Gastrocnemius medialis (tissue), 4 donors: ENCODE measurements at regions of chr15 and their contacts with region 1.

Region 1: DNA sequence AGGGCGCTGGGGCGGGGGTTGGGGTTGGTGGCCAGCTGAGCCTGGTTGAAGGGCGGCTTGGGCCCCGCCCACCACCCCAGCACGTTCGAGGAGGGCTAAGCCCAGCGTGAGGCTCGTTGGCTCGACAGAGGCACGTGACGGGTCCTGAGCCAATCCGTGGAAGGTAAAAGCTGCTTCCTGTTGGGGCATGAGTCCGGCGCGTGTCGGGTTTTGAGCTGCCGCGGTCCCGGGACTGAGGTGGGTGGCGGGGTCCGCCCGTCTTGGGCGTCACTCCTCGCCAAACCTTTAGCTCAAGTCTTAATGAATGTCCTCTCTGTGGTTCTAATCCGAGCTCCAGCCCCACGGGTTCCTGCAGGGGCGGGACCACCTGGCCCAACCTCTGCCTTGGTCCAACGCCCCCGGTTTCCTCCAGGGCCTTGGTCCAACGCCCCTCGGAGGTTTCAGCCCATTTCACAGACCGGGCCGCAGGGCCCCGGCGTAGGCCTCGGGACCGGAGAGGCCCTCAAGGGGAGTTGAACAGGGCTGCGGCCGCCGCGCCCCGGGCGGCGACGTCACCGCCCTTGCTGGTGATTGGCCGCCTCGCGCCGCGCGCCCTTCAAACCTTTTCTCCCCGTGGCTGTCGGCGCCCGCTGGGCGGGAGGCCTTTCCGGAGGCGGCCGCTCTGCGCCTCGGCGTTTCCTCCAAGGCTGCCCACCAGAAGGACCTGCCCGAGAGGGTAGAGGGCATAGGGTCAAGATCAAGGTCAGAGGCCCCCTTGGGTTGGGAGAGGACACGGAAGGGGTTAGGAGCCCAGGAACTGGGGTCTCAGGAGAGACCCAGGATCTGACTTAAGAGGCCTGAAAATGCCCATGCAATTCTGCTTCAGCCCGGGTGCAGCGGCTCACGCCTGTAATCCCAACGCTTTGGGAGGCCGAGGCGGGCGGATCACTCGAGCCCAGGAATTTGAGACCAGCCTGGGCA is at the start of gene RCCD1:
- DNase-seq: peak; percentile 96 to 97
- ATAC-seq: peak; percentile 93
- H3K4me3 ChIP-seq: peak within 1 kb of the TSS; percentile 72 to 88 (median 83)
- H3K27ac ChIP-seq: peak within 1 kb of the TSS; percentile 94 to 97 (median 94)
- H3K4me1 ChIP-seq: peaks cover 28 to 29% of the 10 kb centered on the region in 2 donors
- H3K27me3 ChIP-seq: no peaks in the 10 kb centered on the region
- CTCF ChIP-seq: peak in 1 of 5 experiments; percentile 5
- POLR2A ChIP-seq: peak; percentile 79 to 83
- total RNA-seq, gene RCCD1: 1.4 to 4.8 (median 4.4) TPM

Region 2: DNA sequence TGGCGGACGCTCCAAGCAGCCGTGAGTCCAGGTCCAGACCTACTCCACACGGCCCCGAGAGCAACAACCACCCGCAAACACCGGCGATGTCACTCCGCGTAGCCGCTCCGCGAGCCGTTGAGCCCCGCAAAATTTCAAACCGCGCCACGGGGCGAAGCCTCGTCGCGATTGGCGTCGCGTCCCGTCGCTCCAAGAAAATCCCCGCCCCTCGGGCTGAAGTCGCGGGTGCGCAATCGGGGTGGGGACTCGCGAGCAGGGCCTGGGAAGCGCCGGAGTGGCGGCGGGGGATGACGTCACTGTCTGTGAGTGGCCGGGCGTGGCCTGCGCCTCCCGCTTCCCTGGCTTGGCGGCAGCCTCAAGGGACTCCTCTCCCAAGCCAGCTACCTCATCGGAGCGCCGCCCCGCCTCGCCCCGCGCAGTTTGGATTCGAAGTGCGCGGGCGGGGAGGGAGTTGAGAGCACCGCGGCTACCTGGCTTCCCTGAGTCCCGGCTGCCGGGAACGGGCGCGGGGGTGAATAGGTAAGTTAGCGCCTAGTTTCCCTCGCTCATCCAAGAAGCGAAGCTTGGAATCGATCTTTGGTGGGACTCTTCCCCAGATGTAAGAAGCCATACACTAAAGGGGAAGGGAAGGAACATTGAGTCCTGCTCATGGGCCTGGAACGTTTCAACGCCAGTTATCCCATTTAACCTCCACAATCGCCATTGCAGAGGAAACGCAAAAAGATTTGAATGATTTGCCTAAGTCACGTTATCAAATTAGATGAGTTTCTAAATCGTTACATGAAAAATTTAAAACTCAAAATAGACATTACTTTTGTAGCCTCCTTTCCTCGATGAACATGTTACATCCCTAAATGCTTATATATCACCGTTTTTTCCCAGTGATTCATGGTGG is 39.7 kb after region 1 on chr15 and contains the start of gene PRC1:
- in situ Hi-C with region 1: no loop called
- intact Hi-C with region 1: loop called (anchors 1 kb)
- DNase-seq: peak; percentile 97 to 98
- ATAC-seq: peak; percentile 98
- H3K4me3 ChIP-seq: peak within 1 kb of the TSS; percentile 77 to 99 (median 87)
- H3K27ac ChIP-seq: peak within 1 kb of the TSS; percentile 75 to 86 (median 82)
- H3K4me1 ChIP-seq: peaks cover 0 to 13% of the 10 kb centered on the region in 2 donors
- H3K27me3 ChIP-seq: no peaks in the 10 kb centered on the region
- CTCF ChIP-seq: no peak
- POLR2A ChIP-seq: peak; percentile 48 to 68
- total RNA-seq, gene PRC1: 1.4 to 9.9 (median 4.9) TPM

Region 3: GRCh38 chr15:91022075-91022835 is 67.3 kb after region 1 on chr15 and contains the start of gene VPS33B:
- in situ Hi-C with region 1: no loop called
- intact Hi-C with region 1: loop called (anchors 2 kb)
- DNase-seq: peak; percentile 70 to 73
- ATAC-seq: peak; percentile 93 to 96
- H3K4me3 ChIP-seq: peak within 1 kb of the TSS; percentile 74 to 98 (median 96)
- H3K27ac ChIP-seq: peak within 1 kb of the TSS; percentile 68 to 83 (median 72)
- H3K4me1 ChIP-seq: peaks cover 18 to 26% of the 10 kb centered on the region in 2 donors
- H3K27me3 ChIP-seq: no peaks in the 10 kb centered on the region
- CTCF ChIP-seq: no peak
- POLR2A ChIP-seq: peak in 1 of 2 donors; percentile 15
- total RNA-seq, gene VPS33B: 3.3 to 7.7 (median 4.3) TPM

Region 4: DNA sequence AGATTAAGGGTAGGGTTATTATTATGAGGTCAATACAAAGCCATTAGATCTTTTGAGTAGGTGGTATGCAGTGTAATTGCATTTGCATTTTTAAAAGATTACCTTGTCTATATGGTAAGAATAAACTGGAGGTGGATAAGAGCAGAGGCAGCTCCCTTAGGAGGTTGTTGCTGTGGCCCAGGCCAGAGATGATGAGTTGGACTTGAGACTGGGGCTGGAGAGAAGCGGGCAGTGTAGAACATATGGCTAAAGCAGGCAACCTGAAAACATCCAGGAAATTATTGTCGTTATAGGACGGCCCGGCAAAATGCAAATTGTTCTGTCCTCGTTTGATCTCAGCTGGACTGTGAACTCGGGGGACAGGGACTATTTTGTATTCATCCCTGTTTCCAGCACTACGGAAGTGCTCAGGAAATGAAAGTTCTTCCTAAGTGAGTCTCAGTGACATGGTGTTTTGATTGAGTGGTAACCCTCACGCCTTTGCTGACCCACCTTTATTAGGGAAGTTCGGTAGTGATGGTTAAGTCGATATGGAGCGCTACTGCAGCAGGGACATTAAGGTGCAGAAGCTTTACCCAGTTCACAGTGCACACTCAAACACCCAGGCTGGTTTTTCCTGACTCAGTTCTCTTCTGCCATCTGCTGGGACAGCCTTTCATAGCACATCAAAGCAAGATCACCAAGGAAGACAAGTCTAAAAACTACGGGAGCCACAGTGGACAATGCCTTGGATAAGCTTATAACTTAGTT is 94.6 kb after region 1 on chr15:
- in situ Hi-C with region 1: loop called in 1 of 4 experiments (anchors 10 kb)
- intact Hi-C with region 1: loop called (anchors 2 kb)
- DNase-seq: peak; percentile 21 to 38
- ATAC-seq: peak; percentile 95 to 96
- H3K4me3 ChIP-seq: no peak overlapping the region
- H3K27ac ChIP-seq: no peak overlapping the region
- H3K4me1 ChIP-seq: no peaks in the 10 kb centered on the region
- H3K27me3 ChIP-seq: no peaks in the 10 kb centered on the region
- CTCF ChIP-seq: peak; percentile 27 to 66 (median 49)
- POLR2A ChIP-seq: no peak

Region 5: GRCh38 chr15:91150502-91151160 is 195.6 kb after region 1 on chr15:
- in situ Hi-C with region 1: no loop called
- intact Hi-C with region 1: no loop called
- DNase-seq: no peak
- ATAC-seq: no peak
- H3K4me3 ChIP-seq: no peak overlapping the region
- H3K27ac ChIP-seq: no peak overlapping the region
- H3K4me1 ChIP-seq: no peaks in the 10 kb centered on the region
- H3K27me3 ChIP-seq: peaks cover 0 to 3% (median 0%) of the 10 kb centered on the region in 3 donors
- CTCF ChIP-seq: no peak
- POLR2A ChIP-seq: no peak

Region 6: GRCh38 chr15:91263996-91264531 is 309.1 kb after region 1 on chr15:
- in situ Hi-C with region 1: loop called in 3 of 4 experiments (anchors 10 to 25 kb)
- intact Hi-C with region 1: loop called (anchors 1 kb)
- DNase-seq: peak; percentile 76 to 90
- ATAC-seq: peak; percentile 96 to 98
- H3K4me3 ChIP-seq: peak overlapping the region; percentile 8 to 48 (median 34)
- H3K27ac ChIP-seq: peak overlapping the region; percentile 72 to 80 (median 76)
- H3K4me1 ChIP-seq: peaks cover 9 to 16% of the 10 kb centered on the region in 2 donors
- H3K27me3 ChIP-seq: no peaks in the 10 kb centered on the region
- CTCF ChIP-seq: no peak
- POLR2A ChIP-seq: peak; percentile 27 to 65

Region 7: GRCh38 chr15:91271565-91272153 is 316.7 kb after region 1 on chr15:
- in situ Hi-C with region 1: loop called (anchors 10 to 25 kb)
- intact Hi-C with region 1: loop called (anchors 2 kb)
- DNase-seq: peak in 1 of 2 donors; percentile 39
- ATAC-seq: peak; percentile 65 to 90
- H3K4me3 ChIP-seq: no peak overlapping the region
- H3K27ac ChIP-seq: no peak overlapping the region
- H3K4me1 ChIP-seq: peaks cover 0 to 3% of the 10 kb centered on the region in 2 donors
- H3K27me3 ChIP-seq: no peaks in the 10 kb centered on the region
- CTCF ChIP-seq: peak; percentile 75 to 78 (median 75)
- POLR2A ChIP-seq: no peak